Activated CD4-positive, alpha-beta T cell treated with anti-CD3 and anti-CD28 coated beads for 36 hours (primary cell): ENCODE measurements at regions of chr7 and their contacts with region 1.

Region 1: DNA sequence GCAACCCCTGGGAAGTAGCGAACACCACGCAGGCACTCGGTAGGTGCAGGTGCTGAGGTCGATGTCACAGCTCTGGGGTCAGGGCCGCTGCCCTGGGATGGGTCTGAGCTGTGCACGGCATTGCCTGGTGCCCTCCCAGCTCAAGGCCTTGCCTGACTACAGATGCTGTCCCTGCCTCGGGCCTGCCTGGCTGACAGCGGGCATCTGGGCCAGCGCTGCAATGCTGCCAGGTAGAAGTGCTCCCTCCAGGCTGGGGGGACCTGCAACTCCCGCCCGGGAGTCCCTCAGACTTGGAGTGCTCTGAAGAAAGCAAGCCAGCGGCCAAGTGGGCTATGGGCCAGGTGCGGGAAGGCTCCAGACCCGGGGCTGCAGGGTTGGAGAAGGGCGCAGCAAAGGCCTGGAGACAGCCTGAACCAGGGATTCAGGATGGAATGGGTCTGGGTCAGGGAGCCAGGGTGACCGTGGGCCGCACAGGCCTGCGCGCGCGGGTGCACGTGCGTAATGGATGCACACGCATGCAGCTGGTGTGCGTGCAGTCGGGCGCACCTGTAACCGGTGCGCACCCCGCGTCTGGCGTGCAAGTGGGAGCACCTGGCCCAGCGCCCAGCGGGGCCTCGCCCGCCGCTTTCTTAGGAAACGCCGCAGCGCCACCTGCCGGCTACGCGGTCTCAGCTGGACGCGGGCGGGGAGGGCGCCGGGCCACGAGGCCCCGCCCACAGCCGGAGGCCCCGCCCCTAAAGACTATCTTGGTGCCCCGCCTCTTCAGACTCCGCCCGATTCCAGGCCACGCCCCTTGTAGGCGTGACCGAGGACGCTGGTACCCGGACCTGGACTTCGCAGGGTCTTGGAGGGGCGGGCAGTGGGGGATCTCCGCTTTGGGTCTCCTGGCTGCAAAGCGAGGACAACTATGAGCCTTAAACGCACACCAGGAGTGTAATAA is 46.7 kb downstream of the MICALL2 start:
- DNase-seq: peak; percentile 97
- ATAC-seq: peak; percentile 82
- H3K4me3 Mint-ChIP-seq: no peak overlapping the region
- H3K27ac Mint-ChIP-seq: no peak overlapping the region
- H3K4me1 Mint-ChIP-seq: peaks cover 14% of the 10 kb centered on the region
- H3K27me3 Mint-ChIP-seq: peaks cover 5% of the 10 kb centered on the region

Region 2: GRCh38 chr7:1368682-1369571 is 43.7 kb before region 1 on chr7:
- CTCF ChIA-PET with region 1: no interaction called
- POLR2A ChIA-PET with region 1: no interaction called
- intact Hi-C with region 1: loop called in 1 of 2 experiments (anchors 1 kb)
- DNase-seq: peak; percentile 76
- ATAC-seq: peak; percentile 81
- H3K4me3 Mint-ChIP-seq: no peak overlapping the region
- H3K27ac Mint-ChIP-seq: no peak overlapping the region
- H3K4me1 Mint-ChIP-seq: no peaks in the 10 kb centered on the region
- H3K27me3 Mint-ChIP-seq: peaks cover 43% of the 10 kb centered on the region

Region 3: DNA sequence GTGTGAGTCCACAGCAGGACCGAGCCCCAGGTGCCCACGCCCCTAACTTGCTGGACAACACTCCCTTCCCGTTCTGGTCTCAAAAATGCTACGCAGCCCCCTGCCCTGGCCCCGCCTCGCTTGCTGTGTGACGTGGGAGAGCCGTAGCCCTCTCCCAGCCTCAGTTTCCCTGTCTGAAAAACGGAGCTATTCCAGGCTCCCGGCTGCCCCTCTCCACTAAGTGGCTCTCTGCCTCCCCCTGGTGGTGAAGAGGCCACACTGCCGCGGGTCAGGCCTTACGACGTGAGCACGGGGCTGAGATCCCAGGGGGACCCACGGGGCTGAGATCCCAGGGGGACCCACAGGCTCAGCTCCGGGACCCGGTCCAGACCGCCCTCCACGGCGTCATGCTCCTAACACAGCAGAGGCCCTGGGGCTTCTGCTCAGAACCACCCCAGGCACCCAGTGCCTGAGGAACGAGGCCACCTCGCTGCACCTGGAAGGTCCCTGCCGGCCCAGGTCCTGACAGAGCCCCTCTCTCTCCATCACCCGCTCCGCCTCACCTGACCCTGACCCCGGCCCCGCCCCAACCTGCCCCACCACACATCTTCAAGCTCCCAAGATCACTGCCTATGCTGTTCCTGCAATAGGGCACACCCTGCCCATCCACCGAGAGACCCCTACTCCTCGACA is 20.0 kb after region 1 on chr7:
- CTCF ChIA-PET with region 1: interaction called, 13 read pairs
- POLR2A ChIA-PET with region 1: no interaction called
- intact Hi-C with region 1: loop called (anchors 1 kb)
- DNase-seq: peak; percentile 89
- ATAC-seq: peak; percentile 88
- H3K4me3 Mint-ChIP-seq: no peak overlapping the region
- H3K27ac Mint-ChIP-seq: no peak overlapping the region
- H3K4me1 Mint-ChIP-seq: peaks cover 3% of the 10 kb centered on the region
- H3K27me3 Mint-ChIP-seq: peaks cover 2% of the 10 kb centered on the region

Region 4: DNA sequence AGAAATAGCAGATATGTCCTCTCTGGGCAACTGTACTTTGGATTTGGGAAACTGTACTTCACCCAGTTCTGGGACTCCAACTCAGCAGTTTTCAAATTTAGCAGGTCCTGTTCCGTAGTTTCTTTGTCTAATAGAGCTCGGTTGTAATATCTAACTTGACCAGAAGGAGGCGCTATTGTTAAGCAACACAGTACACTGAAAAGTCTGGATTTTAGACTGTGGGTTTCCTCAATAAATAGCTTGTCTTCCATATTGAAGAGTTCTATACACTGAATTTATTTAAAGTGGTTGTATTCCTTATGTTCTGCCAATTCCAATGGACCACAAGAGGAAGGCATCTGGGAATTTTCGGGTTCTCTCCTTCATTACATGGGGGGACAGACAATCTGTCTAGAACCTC is 297.3 kb after region 1 on chr7:
- CTCF ChIA-PET with region 1: no interaction called
- POLR2A ChIA-PET with region 1: no interaction called
- intact Hi-C with region 1: no loop called
- DNase-seq: no peak
- ATAC-seq: no peak
- H3K4me3 Mint-ChIP-seq: no peak overlapping the region
- H3K27ac Mint-ChIP-seq: no peak overlapping the region
- H3K4me1 Mint-ChIP-seq: no peaks in the 10 kb centered on the region
- H3K27me3 Mint-ChIP-seq: no peaks in the 10 kb centered on the region